ENCODE measurements at regions of chr19 and their contacts with region 1.

Region 1: GRCh38 chr19:41785653-41786052 is 10.7 kb upstream of the CEACAM3 start:
- DNase-seq: peak; percentile 72 to 80 (median 78)
- H3K4me3 ChIP-seq: no peak overlapping the region
- H3K4me3 Mint-ChIP-seq: peak overlapping the region in 4 of 8 donors; percentile 3 to 54 (median 33)
- H3K27ac ChIP-seq: no peak overlapping the region
- H3K27ac Mint-ChIP-seq: no peak overlapping the region
- H3K4me1 ChIP-seq: peaks cover 13% of the 10 kb centered on the region
- H3K4me1 Mint-ChIP-seq: peaks cover 15 to 17% (median 16%) of the 10 kb centered on the region in 4 donors
- H3K27me3 ChIP-seq: peaks cover 11% of the 10 kb centered on the region
- H3K27me3 Mint-ChIP-seq: peaks cover 34 to 46% of the 10 kb centered on the region in 2 donors

Region 2: DNA sequence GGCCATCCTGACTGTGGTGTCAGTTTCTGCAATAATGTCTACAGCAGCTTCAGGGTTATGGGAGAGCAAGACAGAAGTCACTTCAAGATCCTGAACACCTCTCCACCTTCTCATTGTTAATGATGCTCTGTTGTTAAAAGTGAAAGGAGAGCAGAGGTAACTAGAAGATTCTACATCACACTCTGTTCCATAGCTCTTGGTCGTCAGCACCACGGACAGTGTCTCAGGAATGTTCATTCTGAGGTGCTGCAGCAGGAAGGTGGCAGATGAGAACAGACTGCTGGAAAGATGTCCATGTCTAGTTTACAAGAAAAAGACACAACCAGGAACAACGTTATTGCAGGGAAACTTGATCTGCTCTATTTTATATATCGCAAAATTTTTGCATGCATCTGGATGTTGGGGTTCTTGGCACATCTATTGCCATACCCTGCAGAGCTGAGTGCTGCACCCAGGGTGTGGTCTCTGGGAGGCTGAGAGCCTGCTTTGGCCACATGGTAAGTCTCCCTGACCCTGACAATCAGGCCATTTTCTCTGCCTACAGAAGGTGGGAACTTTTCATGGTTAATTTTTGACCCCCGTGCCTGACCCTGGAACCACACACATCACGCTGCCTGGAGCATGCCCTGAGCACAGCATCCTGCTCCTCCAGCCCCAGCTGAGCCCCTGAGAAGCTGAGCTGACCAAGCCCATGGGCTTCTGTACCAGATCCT is 197.0 kb before region 1 on chr19:
- CTCF ChIA-PET with region 1: no interaction called
- POLR2A ChIA-PET with region 1: no interaction called
- intact Hi-C with region 1: no loop called
- DNase-seq: no peak
- H3K4me3 ChIP-seq: no peak overlapping the region
- H3K4me3 Mint-ChIP-seq: peak overlapping the region in 1 of 8 donors; percentile 34
- H3K27ac ChIP-seq: no peak overlapping the region
- H3K27ac Mint-ChIP-seq: peak overlapping the region in 2 of 7 donors; percentile 7 to 49
- H3K4me1 ChIP-seq: no peaks in the 10 kb centered on the region
- H3K4me1 Mint-ChIP-seq: no peaks in the 10 kb centered on the region
- H3K27me3 ChIP-seq: peaks cover 7% of the 10 kb centered on the region
- H3K27me3 Mint-ChIP-seq: no peaks in the 10 kb centered on the region

Region 3: DNA sequence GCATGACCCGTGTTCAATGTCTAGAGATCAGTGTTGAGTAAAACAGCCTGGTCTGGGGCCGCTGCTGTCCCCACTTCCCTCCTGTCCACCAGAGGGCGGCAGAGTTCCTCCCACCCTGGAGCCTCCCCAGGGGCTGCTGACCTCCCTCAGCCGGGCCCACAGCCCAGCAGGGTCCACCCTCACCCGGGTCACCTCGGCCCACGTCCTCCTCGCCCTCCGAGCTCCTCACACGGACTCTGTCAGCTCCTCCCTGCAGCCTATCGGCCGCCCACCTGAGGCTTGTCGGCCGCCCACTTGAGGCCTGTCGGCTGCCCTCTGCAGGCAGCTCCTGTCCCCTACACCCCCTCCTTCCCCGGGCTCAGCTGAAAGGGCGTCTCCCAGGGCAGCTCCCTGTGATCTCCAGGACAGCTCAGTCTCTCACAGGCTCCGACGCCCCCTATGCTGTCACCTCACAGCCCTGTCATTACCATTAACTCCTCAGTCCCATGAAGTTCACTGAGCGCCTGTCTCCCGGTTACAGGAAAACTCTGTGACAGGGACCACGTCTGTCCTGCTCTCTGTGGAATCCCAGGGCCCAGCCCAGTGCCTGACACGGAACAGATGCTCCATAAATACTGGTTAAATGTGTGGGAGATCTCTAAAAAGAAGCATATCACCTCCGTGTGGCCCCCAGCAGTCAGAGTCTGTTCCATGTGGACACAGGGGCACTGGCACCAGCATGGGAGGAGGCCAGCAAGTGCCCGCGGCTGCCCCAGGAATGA is 78.7 kb before region 1 on chr19:
- CTCF ChIA-PET with region 1: interaction called, 5 read pairs
- POLR2A ChIA-PET with region 1: no interaction called
- intact Hi-C with region 1: loop called (anchors 1 kb)
- DNase-seq: peak; percentile 68 to 80 (median 74)
- H3K4me3 ChIP-seq: peak overlapping the region; percentile 29 to 45
- H3K4me3 Mint-ChIP-seq: peak overlapping the region; percentile 63 to 85 (median 78)
- H3K27ac ChIP-seq: no peak overlapping the region
- H3K27ac Mint-ChIP-seq: no peak overlapping the region
- H3K4me1 ChIP-seq: no peaks in the 10 kb centered on the region
- H3K4me1 Mint-ChIP-seq: peaks cover 3 to 6% (median 6%) of the 10 kb centered on the region in 4 donors
- H3K27me3 ChIP-seq: peaks cover 5% of the 10 kb centered on the region
- H3K27me3 Mint-ChIP-seq: peaks cover 17 to 31% of the 10 kb centered on the region in 2 donors

Region 4: GRCh38 chr19:41775360-41775695 is 10.3 kb before region 1 on chr19:
- CTCF ChIA-PET with region 1: interaction called, 22 read pairs
- POLR2A ChIA-PET with region 1: no interaction called
- intact Hi-C with region 1: loop called (anchors 1 kb)
- DNase-seq: no peak
- H3K4me3 ChIP-seq: no peak overlapping the region
- H3K4me3 Mint-ChIP-seq: peak overlapping the region in 3 of 8 donors; percentile 64 to 74 (median 67)
- H3K27ac ChIP-seq: no peak overlapping the region
- H3K27ac Mint-ChIP-seq: peak overlapping the region in 1 of 7 donors; percentile 87
- H3K4me1 ChIP-seq: peaks cover 39% of the 10 kb centered on the region
- H3K4me1 Mint-ChIP-seq: peaks cover 26 to 45% (median 34%) of the 10 kb centered on the region in 4 donors
- H3K27me3 ChIP-seq: peaks cover 18% of the 10 kb centered on the region
- H3K27me3 Mint-ChIP-seq: peaks cover 54 to 61% of the 10 kb centered on the region in 2 donors

Measured in CD4-positive, alpha-beta memory T cell (primary cell).